Esophagus squamous epithelium (tissue), 5 donors: ENCODE measurements at regions of chr15 and their contacts with region 1.

Region 1: DNA sequence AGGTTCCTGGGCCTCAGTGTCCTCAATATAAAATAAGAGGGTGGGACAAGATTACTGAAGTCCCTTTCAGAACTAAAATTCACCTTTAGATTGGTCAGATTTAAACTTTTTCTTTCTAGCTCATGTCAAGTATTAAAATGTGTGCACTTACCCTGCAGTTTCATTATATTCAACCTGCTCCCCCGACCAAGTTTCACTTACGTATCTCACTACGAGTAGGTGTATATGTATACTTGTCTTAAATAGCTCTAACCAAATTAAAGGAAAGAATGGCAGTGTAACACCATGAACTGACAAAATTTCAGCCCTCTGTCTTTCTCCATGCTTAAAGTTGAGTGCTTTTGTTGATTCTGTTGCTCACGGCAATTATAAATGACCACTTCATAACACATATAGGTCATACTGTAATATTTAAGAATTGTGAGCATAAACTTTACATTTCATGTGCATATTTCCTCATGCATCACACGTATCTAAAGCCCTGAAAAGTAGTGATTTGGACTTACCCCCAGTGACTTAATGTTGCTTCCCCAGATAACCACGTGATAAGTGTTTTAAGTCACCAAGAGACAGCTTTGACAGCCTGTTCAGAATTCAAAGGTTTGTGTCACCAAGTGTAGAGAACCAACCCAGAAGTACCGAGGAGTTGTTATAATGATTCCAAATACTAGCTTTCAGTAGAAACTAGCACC is 70.0 kb downstream of the PGPEP1L start:
- DNase-seq: no peak
- H3K4me3 ChIP-seq: no peak overlapping the region
- H3K27ac ChIP-seq: no peak overlapping the region
- H3K4me1 ChIP-seq: peaks cover 0 to 5% (median 0%) of the 10 kb centered on the region in 3 donors
- H3K27me3 ChIP-seq: no peaks in the 10 kb centered on the region
- CTCF ChIP-seq: no peak
- POLR2A ChIP-seq: no peak

Region 2: DNA sequence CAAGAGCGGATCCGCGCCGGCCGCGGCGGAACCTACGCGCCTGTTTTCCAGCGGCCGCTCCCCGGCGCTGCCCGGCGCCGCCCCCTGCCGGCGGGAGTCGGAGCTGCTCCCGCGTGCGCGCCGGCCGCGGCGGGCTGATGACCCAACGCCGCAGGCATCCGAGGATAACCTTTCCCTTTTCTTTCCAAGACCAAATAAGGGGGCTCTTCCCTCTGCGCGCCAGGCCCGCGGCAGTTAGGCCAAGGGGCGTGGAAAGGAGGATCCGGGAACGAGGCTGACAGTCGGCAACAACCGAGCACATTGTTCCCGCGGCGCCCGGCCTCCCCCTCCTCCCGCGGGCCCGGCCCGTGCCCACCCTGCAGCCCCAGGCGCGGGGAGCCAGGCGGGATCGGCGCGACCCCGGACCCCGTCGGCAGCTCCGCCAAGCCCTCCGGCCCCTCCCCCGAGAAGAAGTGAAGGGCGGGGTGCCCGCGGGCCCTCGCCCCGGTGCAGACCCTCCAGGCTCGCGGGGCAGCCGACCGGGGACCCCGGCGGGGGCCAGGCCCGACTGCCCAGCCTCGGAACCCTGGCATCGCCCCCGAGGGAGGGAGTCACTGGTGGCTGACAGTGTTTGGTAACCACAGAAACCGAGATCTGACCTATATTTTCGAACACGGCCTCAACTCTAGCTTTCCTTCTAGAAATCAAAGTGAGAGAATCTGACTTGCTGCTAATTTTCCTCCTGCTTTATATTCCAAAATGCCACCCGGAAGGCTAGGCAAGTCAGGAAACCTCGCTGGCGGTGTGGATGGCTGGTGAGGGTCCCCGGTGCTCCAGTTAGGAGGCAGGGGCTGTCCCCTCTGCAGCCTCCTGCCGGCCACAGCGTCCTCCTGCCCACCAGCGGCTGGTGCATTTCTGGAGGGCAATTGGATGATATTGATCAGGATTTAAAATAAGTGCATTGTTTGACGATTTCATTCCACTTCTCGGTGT is 121.7 kb after region 1 on chr15:
- intact Hi-C with region 1: loop called (anchors 10 kb)
- DNase-seq: no peak
- H3K4me3 ChIP-seq: peak overlapping the region; percentile 37 to 78 (median 56)
- H3K27ac ChIP-seq: peak overlapping the region; percentile 69 to 90 (median 80)
- H3K4me1 ChIP-seq: peaks cover 9 to 35% (median 10%) of the 10 kb centered on the region in 3 donors
- H3K27me3 ChIP-seq: peaks cover 0 to 12% (median 0%) of the 10 kb centered on the region in 4 donors
- CTCF ChIP-seq: peak; percentile 32 to 96 (median 86)
- POLR2A ChIP-seq: no peak

Region 3: GRCh38 chr15:99954361-99955180 is 1017.0 kb after region 1 on chr15:
- intact Hi-C with region 1: no loop called
- DNase-seq: no peak
- H3K4me3 ChIP-seq: no peak overlapping the region
- H3K27ac ChIP-seq: peak overlapping the region in 3 of 4 donors; percentile 36 to 64 (median 38)
- H3K4me1 ChIP-seq: peaks cover 8 to 30% (median 20%) of the 10 kb centered on the region in 3 donors
- H3K27me3 ChIP-seq: peaks cover 0 to 17% (median 0%) of the 10 kb centered on the region in 4 donors
- CTCF ChIP-seq: no peak
- POLR2A ChIP-seq: no peak